ENCODE measurements at regions of chr5 and their contacts with region 1.

Region 1: GRCh38 chr5:80759866-80760577 is 105.2 kb upstream of the DHFR start:
- DNase-seq: no peak
- ATAC-seq: no peak
- H3K4me3 ChIP-seq: no peak overlapping the region
- H3K27ac ChIP-seq: no peak overlapping the region
- H3K4me1 ChIP-seq: no peaks in the 10 kb centered on the region
- H3K27me3 ChIP-seq: no peaks in the 10 kb centered on the region
- CTCF ChIP-seq: no peak

Region 2: GRCh38 chr5:80644900-80645299 is 115.1 kb before region 1 on chr5:
- CTCF ChIA-PET with region 1: interaction called, 10 read pairs
- POLR2A ChIA-PET with region 1: no interaction called
- in situ Hi-C with region 1: no loop called
- intact Hi-C with region 1: no loop called
- DNase-seq: no peak
- ATAC-seq: no peak
- H3K4me3 ChIP-seq: no peak overlapping the region
- H3K27ac ChIP-seq: no peak overlapping the region
- H3K4me1 ChIP-seq: no peaks in the 10 kb centered on the region
- H3K27me3 ChIP-seq: no peaks in the 10 kb centered on the region
- CTCF ChIP-seq: no peak

Region 3: GRCh38 chr5:81207009-81207408 is 447.0 kb after region 1 on chr5:
- CTCF ChIA-PET with region 1: no interaction called
- POLR2A ChIA-PET with region 1: no interaction called
- in situ Hi-C with region 1: no loop called
- intact Hi-C with region 1: no loop called
- DNase-seq: no peak
- ATAC-seq: peak; percentile 77
- H3K4me3 ChIP-seq: no peak overlapping the region
- H3K27ac ChIP-seq: no peak overlapping the region
- H3K4me1 ChIP-seq: no peaks in the 10 kb centered on the region
- H3K27me3 ChIP-seq: no peaks in the 10 kb centered on the region
- CTCF ChIP-seq: peak; percentile 71

Measured in Panc1 (cell line).